T-cell (primary cell): ENCODE measurements at regions of chr10 and their contacts with region 1.

Region 1: DNA sequence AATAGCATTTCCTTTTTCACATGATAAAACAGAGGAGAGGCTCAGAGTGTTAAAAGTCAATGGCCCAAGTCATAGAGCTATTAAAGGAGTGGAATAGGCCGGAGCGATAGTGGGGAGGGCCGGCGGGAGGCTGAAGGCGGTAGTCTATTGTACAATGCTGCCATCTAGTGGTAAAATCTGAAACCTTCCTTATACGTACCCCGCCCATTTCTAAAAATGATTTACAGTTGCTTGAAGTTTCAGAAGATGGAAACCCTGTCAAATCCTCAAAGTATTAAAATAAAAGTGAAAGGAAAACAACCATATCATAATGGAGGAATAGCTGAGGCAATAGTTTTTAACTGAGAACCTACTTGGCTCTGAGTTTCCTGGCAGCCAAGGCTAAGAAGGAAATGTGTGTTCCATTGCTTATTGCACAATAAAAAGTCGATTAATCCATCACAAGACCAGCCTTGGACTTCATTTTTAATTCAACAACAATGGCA is 209.1 kb downstream of the CCSER2 start:
- DNase-seq: peak in 11 of 35 experiments; percentile 6 to 80 (median 18)
- ATAC-seq: peak; percentile 45 to 79 (median 64)
- H3K4me3 ChIP-seq: no peak overlapping the region
- H3K4me3 Mint-ChIP-seq: no peak overlapping the region
- H3K27ac ChIP-seq: no peak overlapping the region
- H3K27ac Mint-ChIP-seq: no peak overlapping the region
- H3K4me1 ChIP-seq: peaks cover 0 to 12% of the 10 kb centered on the region in 2 experiments
- H3K4me1 Mint-ChIP-seq: peaks cover 7 to 17% (median 16%) of the 10 kb centered on the region in 3 donors
- H3K27me3 ChIP-seq: peaks cover 2 to 21% of the 10 kb centered on the region in 2 experiments
- H3K27me3 Mint-ChIP-seq: peaks cover 20 to 26% of the 10 kb centered on the region in 2 donors

Region 2: DNA sequence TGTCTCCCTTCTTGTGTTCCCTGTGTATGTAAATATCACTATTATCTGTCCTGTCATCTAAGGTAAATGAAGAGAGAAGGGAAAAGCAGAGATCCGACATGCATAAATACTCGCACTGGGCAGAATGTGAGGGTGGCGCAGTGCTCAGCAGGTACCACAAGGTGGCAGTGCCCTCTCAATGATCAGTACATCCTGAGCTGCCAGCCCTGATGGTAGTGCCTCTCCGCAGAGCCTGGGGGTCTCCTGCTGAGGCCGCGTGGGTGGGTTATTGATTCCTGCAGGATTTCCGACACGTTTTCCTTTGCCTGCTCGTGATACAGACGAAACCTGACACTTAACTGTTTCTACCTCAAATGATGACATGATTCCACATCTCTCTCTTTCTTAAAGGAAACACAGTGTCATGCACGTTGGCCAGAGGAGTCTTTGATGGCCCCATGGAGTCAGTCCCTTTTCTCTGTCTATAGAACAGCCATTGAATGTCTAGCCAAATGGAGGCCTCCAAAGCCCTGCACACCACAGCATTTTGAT is 272.8 kb before region 1 on chr10:
- CTCF ChIA-PET with region 1: interaction called, 46 to 93 read pairs
- POLR2A ChIA-PET with region 1: no interaction called
- DNase-seq: peak; percentile 31 to 83 (median 66)
- ATAC-seq: peak; percentile 88 to 98 (median 92)
- H3K4me3 ChIP-seq: no peak overlapping the region
- H3K4me3 Mint-ChIP-seq: no peak overlapping the region
- H3K27ac ChIP-seq: no peak overlapping the region
- H3K27ac Mint-ChIP-seq: no peak overlapping the region
- H3K4me1 ChIP-seq: peaks cover 0 to 7% of the 10 kb centered on the region in 2 experiments
- H3K4me1 Mint-ChIP-seq: peaks cover 5 to 11% (median 7%) of the 10 kb centered on the region in 3 donors
- H3K27me3 ChIP-seq: peaks cover 0 to 33% of the 10 kb centered on the region in 2 experiments
- H3K27me3 Mint-ChIP-seq: peaks cover 24 to 30% of the 10 kb centered on the region in 2 donors

Region 3: DNA sequence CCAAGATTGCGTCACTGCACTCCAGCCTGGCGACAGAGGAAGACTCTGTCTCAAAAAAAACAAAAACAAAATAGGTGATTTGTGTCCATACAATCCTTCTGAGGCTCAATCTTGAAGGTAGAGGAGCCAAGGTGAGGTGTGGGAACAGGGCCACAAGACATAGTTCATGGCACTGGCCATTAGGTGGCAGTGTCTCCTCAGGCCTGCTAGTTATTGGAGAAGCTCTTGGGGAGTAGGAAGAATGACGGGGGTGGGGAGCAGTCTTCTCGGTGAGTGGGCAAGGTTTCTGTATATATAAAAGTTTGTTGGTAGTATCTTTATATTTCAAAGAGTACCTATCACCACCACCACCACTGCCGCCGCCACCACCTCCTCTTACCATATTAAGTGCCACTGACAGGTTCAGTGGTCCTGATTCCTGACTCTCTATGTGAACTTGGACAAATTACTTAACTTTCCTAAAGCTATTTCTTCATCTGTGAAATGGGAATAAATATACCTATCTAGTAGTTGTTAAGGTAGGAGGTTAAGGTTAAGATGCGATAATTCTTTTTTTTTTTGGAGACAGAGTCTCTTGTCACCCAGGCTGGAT is 185.1 kb before region 1 on chr10:
- CTCF ChIA-PET with region 1: interaction called, 6 to 10 read pairs
- POLR2A ChIA-PET with region 1: interaction called in 1 of 2 experiments, 4 read pairs
- DNase-seq: peak; percentile 34 to 83 (median 66)
- ATAC-seq: peak; percentile 84 to 92 (median 87)
- H3K4me3 ChIP-seq: no peak overlapping the region
- H3K4me3 Mint-ChIP-seq: no peak overlapping the region
- H3K27ac ChIP-seq: no peak overlapping the region
- H3K27ac Mint-ChIP-seq: no peak overlapping the region
- H3K4me1 ChIP-seq: peaks cover 11 to 31% of the 10 kb centered on the region in 2 experiments
- H3K4me1 Mint-ChIP-seq: peaks cover 71 to 82% (median 78%) of the 10 kb centered on the region in 3 donors
- H3K27me3 ChIP-seq: no peaks in the 10 kb centered on the region
- H3K27me3 Mint-ChIP-seq: no peaks in the 10 kb centered on the region

Region 4: DNA sequence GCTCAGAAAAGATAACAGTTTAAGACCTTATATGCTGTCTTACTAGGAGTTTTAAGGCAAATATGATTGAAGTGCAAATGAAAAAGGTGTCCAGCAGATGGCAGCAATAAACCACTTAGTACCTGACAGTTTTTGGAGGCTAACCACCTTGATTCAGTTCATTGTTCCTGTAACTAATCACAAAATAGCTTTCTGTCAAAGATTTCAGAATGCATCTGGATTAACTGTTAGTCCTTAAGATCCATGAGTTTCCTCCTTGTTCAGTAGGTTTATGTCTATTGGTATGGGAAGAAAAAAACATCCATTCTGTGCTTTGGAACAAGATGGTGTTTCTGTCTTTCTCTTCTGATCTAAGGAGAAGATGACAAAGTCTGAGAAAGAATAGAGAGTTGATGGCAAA is 162.5 kb before region 1 on chr10:
- CTCF ChIA-PET with region 1: interaction called, 9 to 19 read pairs
- POLR2A ChIA-PET with region 1: no interaction called
- DNase-seq: peak in 23 of 35 experiments; percentile 6 to 79 (median 31)
- ATAC-seq: peak in 3 of 4 experiments; percentile 52 to 67 (median 59)
- H3K4me3 ChIP-seq: no peak overlapping the region
- H3K4me3 Mint-ChIP-seq: no peak overlapping the region
- H3K27ac ChIP-seq: no peak overlapping the region
- H3K27ac Mint-ChIP-seq: peak overlapping the region; percentile 28 to 34
- H3K4me1 ChIP-seq: no peaks in the 10 kb centered on the region
- H3K4me1 Mint-ChIP-seq: peaks cover 34 to 60% (median 54%) of the 10 kb centered on the region in 3 donors
- H3K27me3 ChIP-seq: no peaks in the 10 kb centered on the region
- H3K27me3 Mint-ChIP-seq: no peaks in the 10 kb centered on the region

Region 5: DNA sequence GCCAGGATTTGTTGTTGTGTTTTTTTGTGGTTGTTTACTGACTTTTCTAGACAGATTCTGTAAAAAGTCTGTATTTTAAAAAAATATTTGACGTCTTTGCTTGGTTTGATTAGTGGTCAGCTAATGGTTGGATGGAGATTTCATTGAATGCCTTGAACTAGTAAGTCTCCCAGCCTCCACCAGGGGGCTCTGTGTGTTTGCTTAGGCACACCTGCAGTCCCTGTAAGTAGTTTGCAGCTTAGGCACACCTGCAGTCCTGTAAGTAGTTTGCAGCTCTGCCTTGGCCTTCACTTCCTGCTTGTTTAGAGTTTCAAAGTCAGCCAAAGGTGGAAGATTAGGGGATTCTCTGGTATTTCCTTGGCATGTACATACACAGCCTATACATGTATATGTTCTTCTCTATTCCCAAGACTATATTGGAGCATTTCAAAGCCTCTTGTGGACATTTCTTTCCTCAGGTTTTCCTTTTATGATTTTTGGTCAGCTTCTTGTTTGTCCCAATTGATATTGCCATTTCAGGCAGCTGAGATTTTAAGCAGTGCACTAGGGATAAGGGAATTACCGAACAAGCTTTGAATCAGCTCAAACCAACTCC is 107.5 kb before region 1 on chr10:
- CTCF ChIA-PET with region 1: interaction called, 7 to 14 read pairs
- POLR2A ChIA-PET with region 1: no interaction called
- DNase-seq: peak; percentile 12 to 76 (median 55)
- ATAC-seq: peak; percentile 67 to 85 (median 72)
- H3K4me3 ChIP-seq: no peak overlapping the region
- H3K4me3 Mint-ChIP-seq: no peak overlapping the region
- H3K27ac ChIP-seq: no peak overlapping the region
- H3K27ac Mint-ChIP-seq: no peak overlapping the region
- H3K4me1 ChIP-seq: peaks cover 0 to 8% of the 10 kb centered on the region in 2 experiments
- H3K4me1 Mint-ChIP-seq: peaks cover 41 to 63% (median 51%) of the 10 kb centered on the region in 3 donors
- H3K27me3 ChIP-seq: no peaks in the 10 kb centered on the region
- H3K27me3 Mint-ChIP-seq: no peaks in the 10 kb centered on the region